Activated naive CD4-positive, alpha-beta T cell treated with anti-CD3 and anti-CD28 coated beads for 36 hours (primary cell): ENCODE measurements at regions of chr22 and their contacts with region 1.

Region 1: DNA sequence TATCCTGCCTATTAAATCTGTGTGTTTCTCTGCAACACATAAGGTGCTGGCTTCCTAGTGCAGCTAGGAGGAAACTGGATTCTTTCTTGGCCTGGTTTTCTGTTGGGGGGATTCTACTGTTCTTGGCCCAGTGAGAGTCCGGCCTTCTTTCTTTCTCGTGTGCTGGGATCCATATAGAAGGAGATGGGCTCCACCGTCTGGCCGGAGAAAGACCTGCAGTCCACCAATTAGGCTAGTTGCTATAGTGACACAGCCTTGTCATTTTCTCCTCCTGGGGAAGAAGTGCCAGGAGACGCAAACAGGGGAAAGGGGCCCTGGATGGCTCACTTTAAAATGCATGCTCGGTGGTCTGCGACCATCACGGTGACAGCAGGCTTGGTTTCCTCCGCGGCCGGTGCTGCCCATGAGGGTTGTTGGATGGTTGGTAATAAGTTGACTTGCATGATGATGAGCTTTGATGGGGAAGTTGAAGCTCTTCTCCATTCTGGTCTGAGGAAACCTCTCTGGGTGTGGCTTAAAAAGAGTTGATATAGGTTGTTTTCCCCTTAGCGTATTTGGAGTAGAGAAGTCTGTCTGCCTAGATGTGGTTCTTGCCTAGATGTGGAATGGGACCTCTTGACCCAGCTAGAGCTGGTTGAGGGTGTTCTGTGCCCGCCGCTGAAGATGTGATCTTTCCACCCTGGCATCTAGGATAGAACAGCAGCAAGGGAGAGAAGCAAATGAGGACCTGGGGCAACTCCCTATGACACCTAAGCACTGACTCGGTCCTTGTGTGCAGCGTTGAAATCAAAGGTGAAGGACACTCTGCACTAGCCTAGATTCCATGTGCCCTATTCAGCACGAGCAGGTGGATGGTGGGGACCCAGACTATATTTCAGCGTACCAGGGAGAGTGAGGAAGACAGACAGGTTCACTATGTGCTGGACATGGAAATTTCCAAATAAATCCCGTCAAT is 1335.0 kb downstream of the BRD1 start:
- DNase-seq: peak; percentile 62
- H3K4me3 Mint-ChIP-seq: no peak overlapping the region
- H3K27ac Mint-ChIP-seq: no peak overlapping the region
- H3K4me1 Mint-ChIP-seq: no peaks in the 10 kb centered on the region
- H3K27me3 Mint-ChIP-seq: peaks cover 48% of the 10 kb centered on the region

Region 2: DNA sequence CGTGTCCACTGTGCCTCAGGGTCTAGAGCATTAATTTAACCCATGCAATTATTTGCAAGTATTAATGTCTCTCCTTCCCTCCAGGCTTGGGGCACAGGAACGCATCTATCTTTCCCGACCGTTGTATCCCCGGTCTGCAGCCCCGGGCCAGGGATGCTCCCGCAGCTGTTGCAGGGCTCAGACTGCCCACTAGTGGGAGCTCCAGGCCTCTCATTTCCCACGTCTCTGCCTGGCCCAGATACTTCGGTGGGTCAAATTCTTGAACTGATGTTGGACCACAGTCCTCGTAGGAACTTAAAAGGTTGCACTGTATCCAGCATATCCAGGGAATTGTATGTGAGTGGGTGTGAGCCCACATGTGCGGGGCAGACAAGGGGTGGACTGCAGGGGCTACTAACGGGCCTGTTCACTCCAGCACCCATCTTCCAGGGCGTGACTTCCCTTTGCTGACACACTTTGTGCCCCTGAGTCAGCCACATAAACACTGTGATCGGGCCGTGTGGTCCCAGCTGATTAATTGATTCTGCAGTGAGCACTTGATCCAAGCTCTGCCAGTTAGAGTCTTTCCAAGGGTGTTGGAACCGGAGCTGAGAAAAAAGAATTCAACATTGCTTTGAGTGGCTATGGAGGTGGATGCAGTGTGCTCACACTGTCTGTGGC is 1278.9 kb before region 1 on chr22:
- CTCF ChIA-PET with region 1: interaction called, 3 read pairs
- intact Hi-C with region 1: loop called (anchors 5 kb)
- DNase-seq: peak; percentile 73
- H3K4me3 Mint-ChIP-seq: no peak overlapping the region
- H3K27ac Mint-ChIP-seq: no peak overlapping the region
- H3K4me1 Mint-ChIP-seq: peaks cover 2% of the 10 kb centered on the region
- H3K27me3 Mint-ChIP-seq: no peaks in the 10 kb centered on the region